ENCODE measurements at regions of chr5 and their contacts with region 1.

Region 1: DNA sequence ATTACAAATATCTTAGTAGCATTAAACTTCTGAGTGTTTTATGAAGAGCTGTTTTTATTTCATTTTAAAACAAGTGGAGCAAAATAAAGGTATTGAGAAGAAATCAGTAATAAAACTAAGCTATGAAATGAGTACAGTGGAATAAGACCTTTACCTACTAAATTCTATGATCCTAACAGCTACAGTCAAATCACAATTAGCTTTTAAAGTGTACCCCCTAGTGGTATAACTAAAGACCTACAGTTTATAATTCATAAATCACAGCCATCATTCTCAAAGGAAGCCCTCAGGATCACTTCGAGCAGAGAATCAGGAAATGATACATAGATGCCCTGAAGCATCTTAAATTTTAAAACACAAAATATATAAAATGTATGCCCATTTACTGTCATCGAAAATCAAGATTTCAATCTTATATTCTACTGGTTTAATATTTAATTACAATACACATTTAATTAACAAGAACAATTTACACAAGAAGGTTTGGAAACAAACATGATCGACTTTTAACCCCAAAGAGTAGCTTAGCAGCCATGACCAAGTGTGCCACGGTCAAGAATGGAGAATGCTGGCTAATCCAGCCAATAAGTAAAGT is 12.3 kb downstream of the CCNH start:
- DNase-seq: peak in 1 of 2 experiments; percentile 43
- H3K4me3 ChIP-seq: no peak overlapping the region
- H3K27ac ChIP-seq: no peak overlapping the region
- H3K4me1 ChIP-seq: no peaks in the 10 kb centered on the region
- H3K27me3 ChIP-seq: no peaks in the 10 kb centered on the region
- CTCF ChIP-seq: peak; percentile 83

Region 2: DNA sequence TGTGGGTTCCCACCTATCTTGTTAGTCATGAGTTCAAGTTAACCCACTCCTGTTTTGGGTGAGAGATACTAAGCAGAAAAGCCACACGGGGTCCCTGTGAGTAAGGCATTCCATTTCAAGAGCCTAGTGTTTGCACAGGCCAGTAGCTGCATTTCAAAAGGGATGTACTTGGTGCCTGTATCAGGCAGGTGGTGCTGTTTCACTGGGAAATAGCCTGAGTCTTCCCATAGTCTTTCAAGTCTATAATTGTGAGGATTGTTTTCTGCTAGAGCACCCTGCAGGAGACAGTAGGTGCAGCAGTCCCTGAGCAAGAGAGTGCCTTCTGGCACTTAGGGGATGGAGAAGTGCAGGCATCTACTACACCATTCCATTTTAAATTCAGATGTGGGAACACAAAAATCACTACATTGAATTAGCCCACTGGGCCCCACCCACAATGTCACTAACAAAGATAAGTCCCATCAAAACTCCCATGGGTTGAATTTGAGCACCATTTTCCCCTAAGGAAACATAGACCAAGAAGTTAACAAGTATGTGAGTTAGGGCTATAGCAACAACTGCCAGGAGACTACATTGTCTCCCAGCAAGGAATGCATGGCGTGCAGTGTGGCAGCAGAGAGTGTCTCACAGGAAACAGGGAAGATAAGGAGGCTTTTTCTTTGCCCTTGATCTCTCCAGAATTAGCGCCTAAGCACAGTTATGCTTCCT is 519.5 kb before region 1 on chr5:
- CTCF ChIA-PET with region 1: no interaction called
- POLR2A ChIA-PET with region 1: no interaction called
- intact Hi-C with region 1: loop called (anchors 5 kb)
- DNase-seq: peak; percentile 43 to 44
- H3K4me3 ChIP-seq: no peak overlapping the region
- H3K27ac ChIP-seq: no peak overlapping the region
- H3K4me1 ChIP-seq: no peaks in the 10 kb centered on the region
- H3K27me3 ChIP-seq: no peaks in the 10 kb centered on the region
- CTCF ChIP-seq: peak; percentile 73

Region 3: GRCh38 chr5:86968301-86968753 is 432.1 kb before region 1 on chr5:
- CTCF ChIA-PET with region 1: no interaction called
- POLR2A ChIA-PET with region 1: no interaction called
- intact Hi-C with region 1: loop called (anchors 1 kb)
- DNase-seq: no peak
- H3K4me3 ChIP-seq: no peak overlapping the region
- H3K27ac ChIP-seq: no peak overlapping the region
- H3K4me1 ChIP-seq: no peaks in the 10 kb centered on the region
- H3K27me3 ChIP-seq: no peaks in the 10 kb centered on the region
- CTCF ChIP-seq: peak; percentile 71

Region 4: DNA sequence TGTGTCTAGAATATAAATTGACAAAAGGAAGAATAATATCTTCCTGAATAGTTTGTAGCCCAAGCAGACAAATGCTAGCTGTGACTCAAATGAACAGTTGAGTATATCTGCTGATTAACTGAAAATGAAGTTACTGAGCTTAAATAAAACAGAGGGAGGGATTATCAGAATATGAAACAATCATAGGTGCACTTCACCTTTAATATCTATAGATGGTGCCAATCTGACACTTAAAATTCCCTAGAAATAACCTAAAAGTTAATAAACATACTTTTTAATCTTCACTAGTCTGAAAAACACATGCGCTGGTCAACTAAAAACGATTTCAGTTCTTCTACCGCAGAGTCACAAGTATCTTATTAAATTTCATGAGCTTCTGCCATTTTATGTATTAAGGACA is 413.6 kb before region 1 on chr5:
- CTCF ChIA-PET with region 1: interaction called, 4 read pairs
- POLR2A ChIA-PET with region 1: no interaction called
- intact Hi-C with region 1: loop called (anchors 1 kb)
- DNase-seq: no peak
- H3K4me3 ChIP-seq: no peak overlapping the region
- H3K27ac ChIP-seq: no peak overlapping the region
- H3K4me1 ChIP-seq: no peaks in the 10 kb centered on the region
- H3K27me3 ChIP-seq: no peaks in the 10 kb centered on the region
- CTCF ChIP-seq: peak; percentile 39; the same call in 1 of the 2 replicates

Region 5: DNA sequence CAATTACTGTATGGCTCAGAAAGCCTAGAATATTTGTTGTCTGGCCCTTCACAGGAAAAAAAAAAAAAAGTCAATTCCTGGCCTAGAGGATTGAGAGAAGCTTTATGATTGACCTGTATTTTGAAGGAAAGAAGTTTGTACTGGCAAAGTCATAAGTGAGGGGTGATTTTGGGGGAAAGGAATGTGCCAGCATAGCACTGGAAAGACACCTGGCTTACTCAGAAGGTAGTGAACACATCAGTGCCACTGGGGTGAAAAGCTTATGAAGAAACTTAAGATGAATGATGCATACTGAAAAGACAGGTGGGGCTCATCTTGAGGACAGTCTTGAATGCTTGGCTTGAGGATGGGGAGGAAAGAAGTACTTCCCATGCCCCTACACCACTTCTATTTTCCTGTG is 260.6 kb before region 1 on chr5:
- CTCF ChIA-PET with region 1: no interaction called
- POLR2A ChIA-PET with region 1: interaction called, 14 read pairs
- intact Hi-C with region 1: no loop called
- DNase-seq: no peak
- H3K4me3 ChIP-seq: no peak overlapping the region
- H3K27ac ChIP-seq: no peak overlapping the region
- H3K4me1 ChIP-seq: no peaks in the 10 kb centered on the region
- H3K27me3 ChIP-seq: no peaks in the 10 kb centered on the region
- CTCF ChIP-seq: no peak

Measured in PC-9 (cell line).